CD8-positive, alpha-beta T cell (primary cell): ENCODE measurements at regions of chr5 and their contacts with region 1.

Region 1: GRCh38 chr5:6576861-6577501 is 55.9 kb downstream of the NSUN2 start:
- DNase-seq: peak in 3 of 9 experiments; percentile 16 to 38 (median 24)
- ATAC-seq: no peak
- H3K4me3 ChIP-seq: no peak overlapping the region
- H3K4me3 Mint-ChIP-seq: no peak overlapping the region
- H3K27ac ChIP-seq: no peak overlapping the region
- H3K27ac Mint-ChIP-seq: no peak overlapping the region
- H3K4me1 ChIP-seq: no peaks in the 10 kb centered on the region
- H3K4me1 Mint-ChIP-seq: no peaks in the 10 kb centered on the region
- H3K27me3 ChIP-seq: peaks cover 0 to under 1% of the 10 kb centered on the region in 2 experiments
- H3K27me3 Mint-ChIP-seq: peaks cover 24% of the 10 kb centered on the region
- CTCF ChIP-seq: no peak

Region 2: GRCh38 chr5:6291961-6292360 is 285.0 kb before region 1 on chr5:
- CTCF ChIA-PET with region 1: interaction called, 3 read pairs
- POLR2A ChIA-PET with region 1: no interaction called
- intact Hi-C with region 1: loop called (anchors 2 kb)
- DNase-seq: peak in 2 of 9 experiments; percentile 21 to 38
- ATAC-seq: no peak
- H3K4me3 ChIP-seq: no peak overlapping the region
- H3K4me3 Mint-ChIP-seq: no peak overlapping the region
- H3K27ac ChIP-seq: no peak overlapping the region
- H3K27ac Mint-ChIP-seq: no peak overlapping the region
- H3K4me1 ChIP-seq: no peaks in the 10 kb centered on the region
- H3K4me1 Mint-ChIP-seq: peaks cover 2% of the 10 kb centered on the region
- H3K27me3 ChIP-seq: no peaks in the 10 kb centered on the region
- H3K27me3 Mint-ChIP-seq: peaks cover 3% of the 10 kb centered on the region
- CTCF ChIP-seq: no peak